GM12878 (cell line): ENCODE measurements at regions of chr4 and their contacts with region 1.

Region 1: GRCh38 chr4:113921089-113921794 is 58.2 kb downstream of the ARSJ start:
- DNase-seq: no peak
- ATAC-seq: peak; percentile 71
- H3K4me3 ChIP-seq: no peak overlapping the region
- H3K27ac ChIP-seq: no peak overlapping the region
- H3K4me1 ChIP-seq: no peaks in the 10 kb centered on the region
- H3K27me3 ChIP-seq: no peaks in the 10 kb centered on the region
- CTCF ChIP-seq: no peak
- EP300 ChIP-seq: no peak
- POLR2A ChIP-seq: no peak
- RAD21 ChIP-seq: no peak

Region 2: DNA sequence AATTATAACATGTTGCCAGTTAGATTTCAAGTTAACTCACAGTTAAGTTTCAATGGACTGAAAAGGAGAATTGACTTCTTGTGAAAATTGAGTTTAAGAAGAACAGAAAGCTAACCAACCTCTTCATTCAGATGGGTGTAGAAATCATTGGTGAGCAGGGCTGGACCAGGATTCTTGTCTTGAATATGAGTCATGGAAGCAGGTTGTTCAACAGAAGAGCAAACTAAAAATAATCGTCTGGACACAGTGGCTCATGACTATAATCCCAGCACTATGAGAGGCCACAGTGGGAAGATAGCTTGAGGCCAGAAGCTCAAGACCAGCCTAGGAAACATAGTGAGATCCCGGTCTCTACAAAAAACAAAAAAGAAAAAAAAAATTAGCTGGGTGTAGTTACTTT is 40.0 kb before region 1 on chr4:
- CTCF ChIA-PET with region 1: interaction called, 3 read pairs
- POLR2A ChIA-PET with region 1: no interaction called
- RAD21 ChIA-PET with region 1: no interaction called
- SMC1A ChIA-PET with region 1: interaction called, 11 read pairs
- in situ Hi-C with region 1: no loop called
- intact Hi-C with region 1: no loop called
- DNase-seq: no peak
- ATAC-seq: no peak
- H3K4me3 ChIP-seq: no peak overlapping the region
- H3K27ac ChIP-seq: no peak overlapping the region
- H3K4me1 ChIP-seq: no peaks in the 10 kb centered on the region
- H3K27me3 ChIP-seq: no peaks in the 10 kb centered on the region
- CTCF ChIP-seq: no peak
- EP300 ChIP-seq: no peak
- POLR2A ChIP-seq: no peak
- RAD21 ChIP-seq: no peak

Region 3: DNA sequence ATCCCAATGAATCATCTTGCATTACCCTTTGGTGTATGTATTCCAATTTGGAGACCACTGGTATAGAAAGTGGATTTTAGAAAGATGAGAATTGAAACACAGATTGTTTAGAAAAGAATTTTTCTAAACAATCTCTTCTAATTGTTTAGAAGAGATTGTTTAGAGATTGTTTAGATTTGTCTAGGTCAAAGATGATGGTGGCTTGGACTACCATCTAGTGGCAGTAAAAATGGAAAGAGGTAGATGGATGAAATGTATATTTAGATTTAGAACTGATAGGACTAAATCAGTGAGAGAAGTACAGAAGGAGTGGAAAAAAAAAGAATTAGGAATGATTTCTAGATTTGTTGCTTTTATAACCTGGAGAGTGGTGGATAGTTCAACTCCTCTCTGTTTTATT is 12.4 kb before region 1 on chr4:
- CTCF ChIA-PET with region 1: interaction called, 10 read pairs
- POLR2A ChIA-PET with region 1: interaction called, 9 read pairs
- RAD21 ChIA-PET with region 1: interaction called, 3 read pairs
- SMC1A ChIA-PET with region 1: interaction called, 9 read pairs
- in situ Hi-C with region 1: no loop called
- intact Hi-C with region 1: no loop called
- DNase-seq: no peak
- ATAC-seq: peak; percentile 52; the same call in 1 of the 3 replicates
- H3K4me3 ChIP-seq: no peak overlapping the region
- H3K27ac ChIP-seq: no peak overlapping the region
- H3K4me1 ChIP-seq: no peaks in the 10 kb centered on the region
- H3K27me3 ChIP-seq: no peaks in the 10 kb centered on the region
- CTCF ChIP-seq: peak in 1 of 3 experiments; percentile 24; a peak in 2 of 6 replicates
- EP300 ChIP-seq: no peak
- POLR2A ChIP-seq: no peak
- RAD21 ChIP-seq: peak; percentile 77

Region 4: GRCh38 chr4:113935190-113935589 is 13.9 kb after region 1 on chr4:
- CTCF ChIA-PET with region 1: interaction called, 6 read pairs
- POLR2A ChIA-PET with region 1: no interaction called
- RAD21 ChIA-PET with region 1: no interaction called
- SMC1A ChIA-PET with region 1: interaction called, 12 read pairs
- in situ Hi-C with region 1: no loop called
- intact Hi-C with region 1: no loop called
- DNase-seq: no peak
- ATAC-seq: no peak
- H3K4me3 ChIP-seq: no peak overlapping the region
- H3K27ac ChIP-seq: no peak overlapping the region
- H3K4me1 ChIP-seq: no peaks in the 10 kb centered on the region
- H3K27me3 ChIP-seq: no peaks in the 10 kb centered on the region
- CTCF ChIP-seq: no peak
- EP300 ChIP-seq: no peak
- POLR2A ChIP-seq: no peak
- RAD21 ChIP-seq: no peak